ENCODE measurements at regions of chr10 and their contacts with region 1.

Region 1: DNA sequence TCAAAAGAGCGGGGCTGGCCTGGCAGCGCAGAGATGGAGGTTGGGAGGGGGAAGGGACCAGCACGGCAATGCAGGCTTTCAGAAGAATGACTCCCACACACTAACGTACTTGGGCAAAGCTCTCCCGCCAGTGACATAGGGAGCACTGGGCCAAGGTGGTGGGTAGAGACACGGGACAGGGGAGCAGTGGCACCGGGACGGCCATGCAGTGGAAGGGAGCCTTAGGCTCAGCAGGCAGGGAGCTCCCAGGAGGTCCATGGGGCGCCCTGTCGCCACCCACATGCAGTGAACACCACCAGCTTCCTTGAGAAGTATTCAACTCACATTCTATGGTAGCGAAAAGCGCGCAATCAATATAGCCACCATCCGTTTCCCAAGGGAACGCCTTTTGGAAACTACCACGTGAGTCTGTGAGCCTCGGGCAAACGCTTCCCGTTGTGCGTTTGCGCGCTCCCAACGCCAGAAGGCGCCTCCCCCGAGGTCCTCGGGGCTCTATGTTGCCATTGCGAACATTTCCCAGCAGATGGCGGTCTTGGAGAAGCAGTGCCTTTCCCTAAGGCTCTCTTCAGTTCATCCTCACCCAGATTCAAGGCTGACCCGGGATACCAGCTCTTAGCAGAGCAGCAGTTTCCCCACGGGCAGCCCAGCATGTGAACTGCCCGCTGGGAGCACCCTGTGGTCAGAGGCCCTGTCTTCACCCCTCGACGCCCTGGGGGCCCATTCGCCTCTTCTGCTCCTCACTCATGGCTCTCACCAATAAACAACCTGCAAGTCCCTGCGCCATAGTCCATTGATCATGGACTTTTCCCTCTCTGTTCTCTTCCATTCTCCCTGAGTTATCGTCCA is 16.4 kb upstream of the OPALIN start:
- DNase-seq: peak; percentile 81
- H3K4me3 Mint-ChIP-seq: peak overlapping the region; percentile 66
- H3K27ac Mint-ChIP-seq: no peak overlapping the region
- H3K4me1 Mint-ChIP-seq: peaks cover 12% of the 10 kb centered on the region
- H3K27me3 Mint-ChIP-seq: peaks cover 19% of the 10 kb centered on the region
- CTCF ChIP-seq: peak; percentile 81

Region 2: DNA sequence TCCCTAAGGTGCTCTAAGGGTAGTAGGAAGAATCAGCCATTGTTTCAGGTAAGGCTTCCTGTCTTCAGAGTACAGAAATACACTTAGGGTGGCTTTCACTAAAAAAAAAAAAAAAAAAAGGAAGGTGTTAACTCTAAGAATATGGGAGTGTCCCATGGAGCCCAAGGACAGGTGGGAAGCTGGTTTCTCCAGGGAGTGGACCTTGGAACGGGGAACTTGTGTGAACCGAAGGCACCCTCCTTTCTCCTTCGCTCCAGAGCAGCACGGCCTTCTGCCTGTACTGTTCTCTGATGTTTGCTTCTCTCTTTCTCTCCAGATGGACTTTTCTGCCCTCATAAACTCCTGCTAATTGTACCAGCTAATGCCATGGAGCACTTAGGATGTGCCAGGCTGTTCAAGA is 22.6 kb before region 1 on chr10:
- CTCF ChIA-PET with region 1: interaction called, 16 read pairs
- intact Hi-C with region 1: no loop called
- DNase-seq: no peak
- H3K4me3 Mint-ChIP-seq: no peak overlapping the region
- H3K27ac Mint-ChIP-seq: no peak overlapping the region
- H3K4me1 Mint-ChIP-seq: no peaks in the 10 kb centered on the region
- H3K27me3 Mint-ChIP-seq: peaks cover 39% of the 10 kb centered on the region
- CTCF ChIP-seq: no peak

Region 3: DNA sequence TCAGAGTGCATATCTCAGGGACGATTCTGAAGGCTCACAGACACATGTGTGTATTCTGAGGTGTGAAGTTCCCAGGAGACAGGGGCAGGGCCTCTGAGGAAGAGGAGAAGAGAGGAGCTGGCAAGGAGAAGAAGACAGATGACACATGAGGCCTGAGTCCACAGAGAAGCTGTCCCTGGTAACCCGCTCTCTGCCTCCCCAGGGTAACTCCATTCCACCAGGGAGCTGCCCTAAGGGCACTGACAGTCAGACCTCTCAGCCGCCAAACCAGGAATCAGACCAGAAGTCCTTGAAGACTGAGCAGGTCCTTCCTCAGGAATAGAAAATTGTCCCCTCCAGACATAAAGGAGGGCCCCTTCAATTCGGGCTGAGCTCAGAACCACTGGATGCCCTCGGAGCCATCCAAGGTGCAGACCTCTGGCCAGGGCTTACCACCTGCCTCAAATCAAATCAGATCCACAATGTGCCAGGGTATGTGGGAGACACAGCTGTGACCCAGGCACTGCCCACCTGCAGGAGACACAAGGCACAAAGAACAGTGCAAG is 81.2 kb after region 1 on chr10:
- CTCF ChIA-PET with region 1: no interaction called
- intact Hi-C with region 1: no loop called
- DNase-seq: no peak
- H3K4me3 Mint-ChIP-seq: no peak overlapping the region
- H3K27ac Mint-ChIP-seq: no peak overlapping the region
- H3K4me1 Mint-ChIP-seq: no peaks in the 10 kb centered on the region
- H3K27me3 Mint-ChIP-seq: peaks cover 23% of the 10 kb centered on the region
- CTCF ChIP-seq: no peak

Region 4: DNA sequence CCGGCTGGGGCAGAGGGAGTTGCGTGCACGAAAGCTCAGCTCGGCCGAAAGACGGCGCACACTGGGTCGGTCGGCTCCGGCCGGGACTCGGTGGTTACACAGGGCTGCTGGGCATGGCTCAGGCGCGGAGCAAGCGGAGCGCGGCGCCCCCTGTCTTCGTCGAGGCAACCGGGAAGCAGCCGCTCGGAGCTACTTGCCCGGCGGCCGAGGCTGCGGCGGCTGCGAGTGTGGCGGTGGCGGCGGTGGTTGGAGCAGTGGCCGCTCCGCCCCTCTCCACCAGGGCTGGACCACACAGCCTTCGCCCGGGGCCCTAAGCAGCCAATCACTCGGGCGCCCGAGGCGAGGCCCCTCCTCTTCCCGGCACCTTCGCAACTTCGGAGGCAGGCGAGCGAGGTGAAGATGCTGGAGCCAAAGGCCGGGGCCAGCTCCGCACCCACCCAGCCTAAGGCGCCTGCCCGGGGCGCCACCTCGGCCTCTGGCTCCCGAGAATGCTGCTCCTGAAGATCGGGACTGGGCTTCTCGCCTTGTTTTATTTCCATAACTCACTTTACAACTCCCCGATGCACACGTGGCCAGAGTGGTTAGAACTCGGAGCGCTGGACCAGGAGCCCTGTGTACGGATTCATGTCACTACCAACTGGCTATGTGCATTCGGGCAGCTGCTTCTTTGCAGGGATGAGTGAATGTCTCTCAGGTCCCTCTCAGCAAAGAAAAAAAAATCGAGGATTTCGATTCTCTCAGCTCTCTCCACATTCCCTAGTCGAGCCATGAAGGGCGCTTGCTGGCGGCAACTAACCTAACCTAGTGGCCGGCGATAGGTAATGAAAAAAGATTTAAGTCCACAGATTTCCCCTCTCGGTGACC is 138.7 kb after region 1 on chr10 and contains the start of gene TLL2:
- CTCF ChIA-PET with region 1: interaction called, 12 read pairs
- intact Hi-C with region 1: loop called (anchors 1 kb)
- DNase-seq: peak; percentile 89
- H3K4me3 Mint-ChIP-seq: peak within 1 kb of the TSS; percentile 78
- H3K27ac Mint-ChIP-seq: no peak within 1 kb of the TSS
- H3K4me1 Mint-ChIP-seq: no peaks in the 10 kb centered on the region
- H3K27me3 Mint-ChIP-seq: peaks cover 16% of the 10 kb centered on the region
- CTCF ChIP-seq: peak; percentile 7
- total RNA-seq, gene TLL2: 0.44 and 0.66 TPM in 2 replicates

Region 5: GRCh38 chr10:96831867-96832720 is 456.9 kb after region 1 on chr10 and contains the start of gene LCOR:
- CTCF ChIA-PET with region 1: no interaction called
- intact Hi-C with region 1: loop called (anchors 10 kb)
- DNase-seq: peak; percentile 85
- H3K4me3 Mint-ChIP-seq: peak within 1 kb of the TSS; percentile 92
- H3K27ac Mint-ChIP-seq: peak within 1 kb of the TSS; percentile 96
- H3K4me1 Mint-ChIP-seq: peaks cover 22% of the 10 kb centered on the region
- H3K27me3 Mint-ChIP-seq: no peaks in the 10 kb centered on the region
- CTCF ChIP-seq: no peak
- total RNA-seq, gene LCOR: 50.1 and 52.8 TPM in 2 replicates